ENCODE measurements at regions of chr3 and their contacts with region 1.

Region 1: GRCh38 chr3:13463618-13464400 is 16.3 kb upstream of the HDAC11 start:
- DNase-seq: no peak

Region 2: DNA sequence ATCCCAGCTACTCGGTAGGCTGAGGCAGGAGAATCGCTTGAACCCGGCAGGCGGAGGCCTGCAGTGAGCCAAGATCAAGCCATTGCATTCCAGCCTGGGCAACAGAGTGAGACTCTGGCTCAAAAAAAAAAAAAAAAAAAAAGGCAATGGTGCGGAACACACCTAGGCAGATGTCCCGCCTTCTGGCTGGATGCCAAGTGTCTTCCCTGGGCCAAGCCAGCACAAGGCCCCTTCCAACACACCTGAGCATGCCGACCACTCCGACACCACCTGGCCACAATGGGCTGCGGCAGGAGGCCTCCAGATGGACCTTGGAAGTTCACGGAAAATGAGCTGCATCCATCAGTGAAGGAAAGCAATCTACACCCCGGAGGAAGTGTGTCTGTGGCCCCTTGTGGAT is 62.7 kb before region 1 on chr3:
- CTCF ChIA-PET with region 1: no interaction called
- POLR2A ChIA-PET with region 1: no interaction called
- DNase-seq: no peak

Region 3: DNA sequence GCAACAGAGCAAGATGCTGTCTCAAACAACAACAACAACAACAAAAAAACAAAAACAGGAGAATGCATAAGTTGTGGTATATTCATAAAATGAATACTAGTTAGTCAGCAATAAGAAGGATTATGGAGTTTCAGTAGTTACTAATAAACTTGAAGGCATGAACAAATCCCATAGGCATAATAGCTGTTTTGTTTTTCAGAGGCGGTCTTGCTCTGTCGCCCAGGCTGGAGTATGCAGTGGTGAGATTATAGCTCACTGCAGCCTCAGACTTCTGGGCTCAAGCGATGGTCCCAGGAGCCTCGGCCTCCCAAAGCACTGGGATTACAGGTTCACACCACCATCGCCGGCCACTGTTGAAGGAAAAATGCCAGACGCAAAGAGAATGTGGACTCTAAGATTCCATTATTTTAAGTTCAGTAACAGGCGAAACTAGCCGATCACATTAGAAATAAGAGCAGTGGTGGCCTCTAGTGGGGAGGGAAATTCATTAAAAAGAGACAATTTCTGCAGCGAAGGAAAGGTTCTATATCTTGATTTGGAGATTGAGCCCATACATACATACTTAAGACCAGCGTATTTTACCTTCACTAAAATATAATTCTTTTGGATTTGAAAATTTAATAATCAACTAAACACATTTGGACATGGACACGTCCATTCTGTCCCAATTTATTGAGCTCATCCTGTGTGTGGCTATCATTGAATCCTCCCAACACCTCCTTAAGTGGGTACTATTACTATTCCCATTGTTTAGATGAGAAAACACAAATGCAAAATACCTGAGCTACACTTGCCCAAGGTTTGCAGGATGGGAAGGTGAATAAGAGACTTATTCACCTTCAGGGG is 11.1 kb before region 1 on chr3:
- CTCF ChIA-PET with region 1: interaction called, 10 read pairs
- POLR2A ChIA-PET with region 1: interaction called, 3 read pairs
- DNase-seq: peak; percentile 34